Right ventricle myocardium inferior (tissue), 1 donor: ENCODE measurements at regions of chr12 and their contacts with region 1.

Region 1: GRCh38 chr12:88141770-88142609 is at the starts of genes CEP290 and TMTC3:
- DNase-seq: peak; percentile 96
- ATAC-seq: peak; percentile 99
- total RNA-seq, gene CEP290: 6.1 TPM
- total RNA-seq, gene TMTC3: 6.9 TPM

Region 2: DNA sequence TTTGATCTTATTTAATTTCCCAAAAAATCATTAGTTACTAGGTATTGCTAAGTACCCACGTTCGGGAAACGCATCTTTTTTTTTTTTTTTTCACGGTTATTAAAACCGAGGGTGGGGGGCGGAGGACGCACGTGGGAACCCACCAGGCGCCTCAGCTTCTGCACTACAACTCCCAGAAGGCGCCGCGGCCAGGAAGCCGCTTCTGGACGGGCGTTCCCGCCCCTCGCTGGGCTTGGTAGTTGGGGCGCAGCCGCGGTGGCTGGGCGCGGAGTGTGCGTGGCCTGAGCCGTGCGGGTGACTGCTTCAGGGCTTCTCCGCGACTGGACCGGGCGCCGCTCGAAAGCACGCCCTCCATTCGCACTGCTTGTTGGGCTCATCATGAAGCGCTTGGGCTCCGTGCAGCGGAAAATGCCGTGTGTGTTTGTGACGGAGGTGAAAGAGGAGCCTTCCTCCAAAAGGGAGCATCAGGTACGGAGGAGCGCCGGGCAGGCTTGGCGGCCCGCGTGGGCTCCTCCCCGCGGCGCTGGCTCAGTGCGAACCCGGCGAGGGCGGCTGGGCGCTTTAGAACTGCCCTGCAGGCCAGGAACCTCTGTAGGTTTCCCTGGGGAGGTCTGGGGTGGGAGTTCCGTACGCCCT is 106.6 kb before region 1 on chr12:
- intact Hi-C with region 1: loop called (anchors 1 kb)
- DNase-seq: peak; percentile 95
- ATAC-seq: peak; percentile 100

Region 3: DNA sequence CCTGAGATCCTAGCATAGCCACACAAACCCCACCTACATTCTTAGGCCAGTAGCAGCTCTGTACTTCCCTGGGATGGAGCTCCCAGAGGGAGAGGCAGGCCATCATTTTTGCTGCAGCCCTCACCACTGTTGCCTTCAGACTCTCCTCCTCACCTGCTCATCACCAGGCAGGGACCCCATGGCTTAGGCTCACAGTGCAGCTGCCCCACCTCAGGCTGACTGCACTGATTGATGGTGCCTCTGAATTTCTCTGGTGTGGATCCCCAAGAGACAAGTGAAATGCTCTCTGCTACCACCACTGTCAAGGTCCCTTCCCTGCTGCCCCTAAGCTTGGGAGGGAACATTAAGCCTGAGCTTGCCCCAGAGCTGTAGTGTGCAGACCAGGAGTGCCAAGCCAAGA is 76.3 kb after region 1 on chr12:
- intact Hi-C with region 1: no loop called
- DNase-seq: no peak
- ATAC-seq: no peak